ENCODE measurements at regions of chr10 and their contacts with region 1.

Region 1: GRCh38 chr10:132606536-132607316 is 69.1 kb downstream of the INPP5A start:
- DNase-seq: peak; percentile 51 to 69
- ATAC-seq: peak; percentile 60 to 81 (median 70)
- H3K4me3 ChIP-seq: peak overlapping the region in 7 of 10 donors; percentile 9 to 33 (median 21)
- H3K27ac ChIP-seq: no peak overlapping the region
- H3K4me1 ChIP-seq: peaks cover 3 to 59% (median 30%) of the 10 kb centered on the region in 9 donors
- H3K27me3 ChIP-seq: no peaks in the 10 kb centered on the region
- CTCF ChIP-seq: no peak

Region 2: GRCh38 chr10:132571650-132572535 is 34.8 kb before region 1 on chr10:
- intact Hi-C with region 1: loop called in 1 of 10 experiments (anchors 2 kb)
- DNase-seq: peak in 1 of 2 donors; percentile 64
- ATAC-seq: peak; percentile 44 to 95 (median 81)
- H3K4me3 ChIP-seq: no peak overlapping the region
- H3K27ac ChIP-seq: peak overlapping the region in 9 of 10 donors; percentile 7 to 58 (median 45)
- H3K4me1 ChIP-seq: peaks cover 35 to 56% (median 51%) of the 10 kb centered on the region in 9 donors
- H3K27me3 ChIP-seq: no peaks in the 10 kb centered on the region
- CTCF ChIP-seq: no peak

Measured in heart right ventricle (tissue), 16 donors.